Transverse colon (tissue), 4 donors: ENCODE measurements at regions of chr7 and their contacts with region 1.

Region 1: GRCh38 chr7:10685040-10685439 is 288.6 kb upstream of the PHF14 start:
- DNase-seq: no peak
- H3K4me3 ChIP-seq: no peak overlapping the region
- H3K27ac ChIP-seq: no peak overlapping the region
- H3K4me1 ChIP-seq: no peaks in the 10 kb centered on the region
- H3K27me3 ChIP-seq: no peaks in the 10 kb centered on the region
- CTCF ChIP-seq: no peak
- EP300 ChIP-seq: no peak
- POLR2A ChIP-seq: no peak

Region 2: DNA sequence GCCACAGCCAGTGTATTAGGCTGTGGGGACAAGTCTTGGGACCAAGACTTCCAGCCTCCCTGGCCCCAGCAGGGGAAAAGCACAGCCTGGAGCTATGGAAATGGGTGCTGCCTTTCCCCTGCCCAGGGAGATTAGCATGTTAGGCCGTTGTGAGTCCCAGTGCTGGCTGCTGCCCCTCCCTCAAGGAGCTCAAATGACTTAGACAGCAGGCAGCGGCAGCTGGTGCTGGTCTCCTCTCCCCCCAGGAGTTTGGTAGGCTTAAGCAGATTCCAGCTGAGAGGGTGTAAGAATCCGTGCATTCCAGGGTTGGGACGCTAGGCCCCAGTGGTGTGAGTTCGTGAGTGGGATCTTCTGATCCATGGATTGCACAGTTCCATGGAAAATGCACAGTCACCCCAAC is 12.9 kb before region 1 on chr7:
- in situ Hi-C with region 1: no loop called
- intact Hi-C with region 1: loop called (anchors 1 kb)
- DNase-seq: no peak
- H3K4me3 ChIP-seq: no peak overlapping the region
- H3K27ac ChIP-seq: no peak overlapping the region
- H3K4me1 ChIP-seq: no peaks in the 10 kb centered on the region
- H3K27me3 ChIP-seq: no peaks in the 10 kb centered on the region
- CTCF ChIP-seq: no peak
- EP300 ChIP-seq: no peak
- POLR2A ChIP-seq: no peak

Region 3: DNA sequence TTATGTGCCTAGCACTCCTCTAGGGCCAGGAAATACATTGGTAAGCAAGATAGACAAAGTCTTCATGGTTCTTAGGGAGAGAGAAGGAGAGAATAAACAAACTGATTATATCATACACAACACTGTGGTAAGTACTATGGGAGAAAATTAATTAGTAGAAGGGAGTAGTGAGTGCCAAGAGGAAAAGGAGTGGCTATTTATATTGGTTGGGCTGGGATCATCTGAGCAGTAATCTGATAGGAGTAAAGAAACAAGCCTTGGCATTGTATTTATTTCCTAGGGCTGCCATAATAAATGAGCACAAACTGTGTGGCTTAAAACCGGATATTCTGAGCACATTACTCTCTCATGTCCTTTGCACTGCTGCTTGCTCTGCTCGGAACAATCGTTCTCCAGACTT is 130.5 kb after region 1 on chr7:
- in situ Hi-C with region 1: no loop called
- intact Hi-C with region 1: no loop called
- DNase-seq: no peak
- H3K4me3 ChIP-seq: no peak overlapping the region
- H3K27ac ChIP-seq: no peak overlapping the region
- H3K4me1 ChIP-seq: no peaks in the 10 kb centered on the region
- H3K27me3 ChIP-seq: no peaks in the 10 kb centered on the region
- CTCF ChIP-seq: no peak
- EP300 ChIP-seq: no peak
- POLR2A ChIP-seq: no peak

Region 4: GRCh38 chr7:10838228-10838627 is 153.2 kb after region 1 on chr7:
- in situ Hi-C with region 1: no loop called
- intact Hi-C with region 1: no loop called
- DNase-seq: no peak
- H3K4me3 ChIP-seq: no peak overlapping the region
- H3K27ac ChIP-seq: no peak overlapping the region
- H3K4me1 ChIP-seq: no peaks in the 10 kb centered on the region
- H3K27me3 ChIP-seq: no peaks in the 10 kb centered on the region
- CTCF ChIP-seq: no peak
- EP300 ChIP-seq: no peak
- POLR2A ChIP-seq: no peak